ENCODE measurements at regions of chr19 and their contacts with region 1.

Region 1: GRCh38 chr19:4851551-4852290 is 15.7 kb downstream of the PLIN3 start:
- DNase-seq: peak; percentile 34
- H3K4me3 ChIP-seq: no peak overlapping the region
- H3K27ac ChIP-seq: no peak overlapping the region
- H3K4me1 ChIP-seq: no peaks in the 10 kb centered on the region
- H3K27me3 ChIP-seq: no peaks in the 10 kb centered on the region
- CTCF ChIP-seq: peak; percentile 70 to 84 (median 80)
- POLR2A ChIP-seq: no peak

Region 2: GRCh38 chr19:4776436-4777205 is 75.1 kb before region 1 on chr19:
- intact Hi-C with region 1: no loop called
- DNase-seq: no peak
- H3K4me3 ChIP-seq: no peak overlapping the region
- H3K27ac ChIP-seq: no peak overlapping the region
- H3K4me1 ChIP-seq: no peaks in the 10 kb centered on the region
- H3K27me3 ChIP-seq: no peaks in the 10 kb centered on the region
- CTCF ChIP-seq: no peak
- POLR2A ChIP-seq: no peak

Region 3: DNA sequence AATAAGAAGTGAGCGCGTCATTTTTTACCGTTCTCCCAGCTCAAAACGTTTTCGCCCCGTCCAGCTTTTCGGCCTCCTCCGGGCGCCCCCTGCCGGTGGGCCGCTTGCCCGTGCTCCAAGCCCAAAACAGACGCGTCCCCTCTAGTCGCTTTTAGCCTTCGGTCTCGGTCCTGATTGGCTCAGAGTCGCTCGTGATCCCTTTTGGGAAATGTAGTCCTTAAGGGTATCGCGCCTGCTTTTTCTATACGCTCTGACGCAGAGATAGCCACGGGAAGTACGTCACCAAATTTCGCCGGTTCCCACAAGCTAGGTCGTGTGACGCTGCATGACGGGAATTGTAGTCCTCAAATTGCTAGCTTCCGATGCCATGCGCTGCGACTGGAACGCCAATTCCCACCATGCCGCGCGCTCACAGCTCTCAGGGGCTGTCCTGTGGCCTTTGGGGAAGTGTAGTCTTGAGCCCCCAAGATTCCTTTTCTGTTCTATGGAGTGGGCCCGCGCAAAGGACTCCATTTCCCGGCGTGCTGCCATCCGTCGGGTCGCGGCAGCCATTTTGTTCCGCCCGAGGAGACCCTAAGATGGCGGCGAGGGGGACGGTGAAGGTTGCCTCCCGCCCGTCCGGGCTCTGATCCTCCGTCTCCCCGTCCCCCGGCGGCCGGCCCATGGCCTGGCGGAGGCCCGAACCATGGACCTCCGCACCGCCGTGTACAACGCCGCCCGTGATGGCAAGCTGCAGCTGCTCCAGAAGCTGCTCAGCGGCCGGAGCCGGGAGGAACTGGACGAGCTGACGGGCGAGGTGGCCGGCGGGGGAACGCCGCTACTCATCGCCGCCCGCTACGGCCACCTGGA is 60.3 kb before region 1 on chr19 and contains the start of gene FEM1A:
- intact Hi-C with region 1: no loop called
- DNase-seq: peak; percentile 100
- H3K4me3 ChIP-seq: peak within 1 kb of the TSS; percentile 92 to 94
- H3K27ac ChIP-seq: peak within 1 kb of the TSS; percentile 89 to 90
- H3K4me1 ChIP-seq: peaks cover 21% of the 10 kb centered on the region
- H3K27me3 ChIP-seq: no peaks in the 10 kb centered on the region
- CTCF ChIP-seq: peak; percentile 90 to 100 (median 98)
- POLR2A ChIP-seq: peak; percentile 72
- total RNA-seq, gene FEM1A: 20.7 to 30.4 TPM

Region 4: DNA sequence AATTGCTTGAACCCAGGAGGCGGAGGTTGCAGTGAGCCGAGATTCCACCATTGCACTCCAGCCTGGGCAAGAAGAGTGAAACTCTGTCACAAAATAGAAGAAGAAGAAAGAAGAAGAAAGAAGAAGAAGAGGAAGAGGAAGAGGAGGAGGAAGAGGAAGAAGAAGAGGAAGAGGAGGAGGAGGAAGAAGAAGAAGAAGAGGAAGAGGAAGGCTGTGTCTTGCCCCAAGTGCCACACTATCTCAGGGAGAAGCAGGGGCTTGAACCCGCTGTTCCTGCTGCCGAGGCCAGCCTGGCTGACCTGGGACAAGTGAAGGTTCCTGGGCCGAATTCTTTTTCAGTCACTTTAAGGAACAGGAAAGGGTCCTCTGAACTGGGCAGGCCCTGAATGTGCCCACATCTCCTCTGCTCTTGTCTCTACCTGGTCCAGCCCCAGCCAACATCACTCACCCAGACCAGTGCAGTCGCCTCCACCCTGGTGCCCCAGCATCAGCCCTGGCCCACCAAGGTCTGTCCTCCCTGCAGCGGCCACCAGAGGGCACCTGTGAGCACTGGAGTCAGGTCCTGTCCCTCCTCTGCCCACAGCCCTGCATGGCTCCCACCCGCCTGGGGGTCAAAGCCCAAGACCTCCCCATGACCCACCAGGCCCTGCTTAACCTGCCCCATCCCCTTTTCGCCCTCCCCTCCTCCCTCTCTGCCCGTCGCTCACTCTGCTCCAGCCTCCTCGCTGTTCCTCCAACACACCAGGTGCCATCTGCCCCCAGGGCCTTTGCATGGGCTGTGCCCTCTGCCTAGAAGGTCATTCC is 40.2 kb before region 1 on chr19:
- intact Hi-C with region 1: loop called (anchors 1 kb)
- DNase-seq: peak; percentile 60
- H3K4me3 ChIP-seq: no peak overlapping the region
- H3K27ac ChIP-seq: no peak overlapping the region
- H3K4me1 ChIP-seq: no peaks in the 10 kb centered on the region
- H3K27me3 ChIP-seq: no peaks in the 10 kb centered on the region
- CTCF ChIP-seq: peak; percentile 71 to 84 (median 74)
- POLR2A ChIP-seq: no peak

Region 5: GRCh38 chr19:4823577-4823976 is 28.1 kb before region 1 on chr19:
- intact Hi-C with region 1: no loop called
- DNase-seq: no peak
- H3K4me3 ChIP-seq: no peak overlapping the region
- H3K27ac ChIP-seq: no peak overlapping the region
- H3K4me1 ChIP-seq: no peaks in the 10 kb centered on the region
- H3K27me3 ChIP-seq: no peaks in the 10 kb centered on the region
- CTCF ChIP-seq: no peak
- POLR2A ChIP-seq: no peak

Region 6: DNA sequence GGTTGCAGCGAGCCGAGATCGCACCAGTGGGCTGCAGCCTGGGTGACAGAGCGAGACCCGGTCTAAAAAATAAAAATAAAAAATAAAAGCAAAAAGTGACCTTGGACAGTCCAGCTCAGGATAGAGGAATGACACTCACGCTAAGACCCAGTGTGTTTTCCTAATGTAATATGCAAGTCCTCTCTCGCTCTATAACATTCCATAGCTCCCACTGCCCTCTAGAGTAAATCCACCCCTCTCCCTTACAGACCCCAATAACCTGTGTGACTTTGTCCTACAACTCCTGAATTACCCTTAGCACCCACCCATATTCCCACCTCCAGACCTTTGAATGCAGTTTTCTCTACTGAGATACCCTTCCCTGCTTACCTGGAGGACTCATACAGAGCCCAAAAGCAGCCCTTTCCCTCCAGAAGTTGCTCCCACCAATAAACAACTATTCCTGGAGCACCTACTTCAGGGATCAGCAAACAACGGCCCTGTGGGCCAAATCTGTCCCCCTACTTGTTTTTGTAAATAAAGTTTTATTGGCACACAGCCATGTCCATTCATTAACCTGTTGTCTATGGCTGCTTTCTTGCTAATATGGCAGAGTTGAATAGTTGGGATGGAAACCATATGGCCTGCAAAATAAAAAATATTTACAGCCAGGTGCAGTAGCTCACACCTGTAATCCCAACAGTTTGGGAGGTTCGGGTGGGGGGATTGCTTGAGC is 528.7 kb after region 1 on chr19:
- intact Hi-C with region 1: no loop called
- DNase-seq: no peak
- H3K4me3 ChIP-seq: no peak overlapping the region
- H3K27ac ChIP-seq: no peak overlapping the region
- H3K4me1 ChIP-seq: no peaks in the 10 kb centered on the region
- H3K27me3 ChIP-seq: no peaks in the 10 kb centered on the region
- CTCF ChIP-seq: no peak
- POLR2A ChIP-seq: no peak